ENCODE measurements at regions of chr14 and their contacts with region 1.

Region 1: DNA sequence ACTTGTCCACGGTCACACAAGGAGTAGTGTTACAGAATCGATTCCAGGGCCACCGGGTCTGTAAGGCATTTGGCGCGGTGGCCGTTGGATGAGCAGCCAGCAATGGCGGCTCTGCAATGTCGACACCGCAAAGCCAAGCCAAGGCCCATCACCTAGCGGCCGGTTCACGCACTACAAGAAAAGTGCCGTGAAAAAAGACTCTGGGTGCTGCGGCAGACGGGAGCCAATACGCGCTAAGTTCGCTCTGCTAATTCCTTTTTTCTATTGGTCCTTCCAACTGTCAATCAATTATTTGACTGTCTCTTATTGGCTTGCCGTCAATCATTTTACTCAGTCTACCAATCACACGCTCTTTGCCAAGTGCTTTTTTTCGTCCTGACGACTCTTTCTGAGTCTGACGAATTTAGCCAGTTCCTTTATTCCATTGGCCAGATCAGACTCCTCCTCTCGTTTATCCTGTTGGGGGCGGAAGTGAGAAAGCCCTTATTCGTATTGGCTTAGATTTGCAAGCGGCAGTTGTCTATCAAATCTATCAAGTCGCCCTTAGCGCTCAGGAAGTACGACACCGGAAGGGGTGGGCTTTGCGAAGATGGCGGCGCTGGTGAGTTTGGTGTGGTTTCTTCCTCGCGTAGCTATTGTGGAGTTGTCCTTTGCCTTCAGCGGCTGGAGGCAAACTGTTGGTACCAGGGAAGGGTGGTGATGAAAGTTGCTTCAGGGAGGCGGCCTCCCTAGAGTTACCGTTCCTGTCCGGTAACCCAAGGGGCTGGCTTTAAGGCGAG is at the start of gene NGDN:
- DNase-seq: peak; percentile 93 to 99 (median 97)
- H3K4me3 ChIP-seq: peak within 1 kb of the TSS; percentile 75 to 78
- H3K4me3 Mint-ChIP-seq: peak within 1 kb of the TSS in 1 of 8 donors; percentile 35
- H3K27ac ChIP-seq: peak within 1 kb of the TSS; percentile 89
- H3K27ac Mint-ChIP-seq: peak within 1 kb of the TSS in 3 of 7 donors; percentile 36 to 78 (median 43)
- H3K4me1 ChIP-seq: peaks cover 17% of the 10 kb centered on the region
- H3K4me1 Mint-ChIP-seq: peaks cover 0 to 7% (median 6%) of the 10 kb centered on the region in 4 donors
- H3K27me3 ChIP-seq: no peaks in the 10 kb centered on the region
- H3K27me3 Mint-ChIP-seq: no peaks in the 10 kb centered on the region
- total RNA-seq, gene NGDN: 60.7 to 63.5 TPM

Region 2: DNA sequence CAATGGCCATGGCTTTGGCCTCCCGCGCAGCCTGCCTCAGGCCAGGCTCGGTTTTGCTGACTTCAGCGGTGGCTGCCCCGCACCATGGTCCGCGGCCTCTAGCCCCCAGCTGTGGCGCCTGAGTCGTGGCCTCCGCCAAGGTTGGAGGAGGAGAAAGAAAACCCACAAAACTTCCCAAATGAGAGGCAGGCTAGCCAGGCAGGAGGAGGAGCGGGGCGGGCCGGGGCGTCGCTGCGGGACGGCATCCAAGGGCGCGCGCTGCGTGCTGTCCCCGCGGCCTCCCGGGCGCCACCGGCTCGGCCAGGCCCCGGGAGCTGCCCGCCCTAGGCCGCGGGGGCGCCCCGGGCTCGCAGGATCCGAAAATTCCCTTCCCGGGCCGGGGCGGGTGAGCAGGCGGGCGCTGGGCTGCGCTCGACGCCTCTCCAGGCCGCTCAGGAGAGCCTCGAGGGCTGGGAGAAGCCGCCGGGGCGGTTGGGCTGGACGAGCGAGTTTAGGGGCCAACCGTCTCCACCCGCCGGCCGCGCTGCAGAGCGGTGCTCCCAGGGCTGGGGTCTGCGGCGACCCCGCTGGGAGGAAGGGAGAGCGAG is 104.2 kb before region 1 on chr14 and contains the start of gene EFS:
- CTCF ChIA-PET with region 1: no interaction called
- POLR2A ChIA-PET with region 1: no interaction called
- intact Hi-C with region 1: no loop called
- DNase-seq: no peak
- H3K4me3 ChIP-seq: no peak within 1 kb of the TSS
- H3K4me3 Mint-ChIP-seq: peak within 1 kb of the TSS in 1 of 8 donors; percentile 46
- H3K27ac ChIP-seq: no peak within 1 kb of the TSS
- H3K27ac Mint-ChIP-seq: peak within 1 kb of the TSS in 3 of 7 donors; percentile 37 to 73 (median 50)
- H3K4me1 ChIP-seq: no peaks in the 10 kb centered on the region
- H3K4me1 Mint-ChIP-seq: peaks cover 0 to 2% (median 0%) of the 10 kb centered on the region in 4 donors
- H3K27me3 ChIP-seq: peaks cover 6% of the 10 kb centered on the region
- H3K27me3 Mint-ChIP-seq: peaks cover 24 to 31% of the 10 kb centered on the region in 2 donors
- total RNA-seq, gene EFS: not detected

Region 3: DNA sequence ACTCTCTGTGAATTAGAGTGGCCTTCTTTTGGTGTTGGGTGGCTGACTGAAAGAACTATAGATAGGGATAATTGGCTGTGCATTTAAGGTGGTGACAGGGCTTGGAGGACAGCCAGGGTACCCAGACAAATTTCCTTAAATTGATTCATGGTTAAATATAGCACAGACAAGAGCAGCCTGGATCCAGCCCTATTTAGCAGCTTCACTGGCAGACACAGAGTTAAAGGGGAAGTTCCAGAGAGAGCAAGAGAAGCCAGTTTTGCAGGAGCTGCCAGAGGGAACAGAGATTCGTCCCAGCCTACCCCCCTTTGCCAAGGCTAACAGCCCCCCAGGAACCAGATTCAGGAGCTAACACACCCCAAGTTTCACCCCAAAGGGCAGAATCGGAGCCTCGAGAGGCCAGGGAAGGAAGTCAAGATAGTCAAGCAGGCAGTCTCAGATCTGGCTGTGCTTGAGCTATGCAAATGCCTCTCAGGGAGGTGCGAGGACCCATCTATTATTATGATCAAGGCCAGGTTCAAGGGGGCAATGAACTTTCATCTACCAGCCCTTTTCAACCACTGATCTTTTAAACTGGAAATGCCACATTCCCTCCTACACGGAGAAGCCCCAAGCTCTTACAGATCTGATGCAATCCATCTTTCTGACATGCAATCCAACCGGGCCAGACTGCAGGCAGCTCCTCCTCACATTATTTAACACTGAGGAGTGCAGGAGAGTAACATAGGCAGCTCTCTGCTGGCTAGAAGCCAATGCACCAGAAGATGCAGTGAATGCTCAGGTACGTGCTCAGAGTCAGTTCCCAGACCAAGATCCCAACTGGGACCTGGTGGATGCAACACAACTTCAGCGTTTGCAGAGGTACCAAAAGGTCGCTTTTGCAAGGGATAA is 225.0 kb after region 1 on chr14:
- CTCF ChIA-PET with region 1: no interaction called
- POLR2A ChIA-PET with region 1: no interaction called
- intact Hi-C with region 1: no loop called
- DNase-seq: no peak
- H3K4me3 ChIP-seq: no peak overlapping the region
- H3K4me3 Mint-ChIP-seq: no peak overlapping the region
- H3K27ac ChIP-seq: no peak overlapping the region
- H3K27ac Mint-ChIP-seq: no peak overlapping the region
- H3K4me1 ChIP-seq: peaks cover 9% of the 10 kb centered on the region
- H3K4me1 Mint-ChIP-seq: no peaks in the 10 kb centered on the region
- H3K27me3 ChIP-seq: peaks cover 13% of the 10 kb centered on the region
- H3K27me3 Mint-ChIP-seq: peaks cover 20 to 32% of the 10 kb centered on the region in 2 donors

Region 4: GRCh38 chr14:24146978-24147760 is 677.9 kb after region 1 on chr14 and contains the start of gene RNF31:
- CTCF ChIA-PET with region 1: no interaction called
- POLR2A ChIA-PET with region 1: no interaction called
- intact Hi-C with region 1: loop called (anchors 2 kb)
- DNase-seq: peak; percentile 95 to 99 (median 97)
- H3K4me3 ChIP-seq: peak within 1 kb of the TSS; percentile 85 to 99
- H3K4me3 Mint-ChIP-seq: peak within 1 kb of the TSS; percentile 97 to 100 (median 98)
- H3K27ac ChIP-seq: peak within 1 kb of the TSS; percentile 92
- H3K27ac Mint-ChIP-seq: peak within 1 kb of the TSS; percentile 95 to 99 (median 98)
- H3K4me1 ChIP-seq: peaks cover 63% of the 10 kb centered on the region
- H3K4me1 Mint-ChIP-seq: peaks cover 32 to 80% (median 54%) of the 10 kb centered on the region in 4 donors
- H3K27me3 ChIP-seq: no peaks in the 10 kb centered on the region
- H3K27me3 Mint-ChIP-seq: no peaks in the 10 kb centered on the region
- total RNA-seq, gene RNF31: 108 to 113 TPM